ENCODE measurements at regions of chr6 and their contacts with region 1.

Region 1: DNA sequence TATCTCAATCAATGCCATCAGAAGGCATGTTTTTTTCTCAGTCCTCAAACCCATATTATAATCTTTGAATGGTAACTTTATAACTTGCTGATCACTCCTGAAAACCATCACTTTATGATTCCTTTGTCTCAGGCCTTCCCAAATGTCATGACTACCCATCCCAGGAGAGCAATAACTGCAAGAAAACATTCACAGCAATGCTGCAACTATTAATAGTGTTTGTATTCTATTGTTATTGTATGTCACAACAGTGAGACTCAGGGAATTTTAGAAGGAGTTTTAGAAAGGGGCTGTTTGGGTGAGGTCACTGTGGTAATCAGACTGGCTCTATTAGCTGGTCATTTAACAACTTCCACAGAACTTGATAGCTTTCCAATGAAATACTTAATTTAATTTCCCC is 301.4 kb upstream of the TBX18 start:
- DNase-seq: no peak

Region 2: DNA sequence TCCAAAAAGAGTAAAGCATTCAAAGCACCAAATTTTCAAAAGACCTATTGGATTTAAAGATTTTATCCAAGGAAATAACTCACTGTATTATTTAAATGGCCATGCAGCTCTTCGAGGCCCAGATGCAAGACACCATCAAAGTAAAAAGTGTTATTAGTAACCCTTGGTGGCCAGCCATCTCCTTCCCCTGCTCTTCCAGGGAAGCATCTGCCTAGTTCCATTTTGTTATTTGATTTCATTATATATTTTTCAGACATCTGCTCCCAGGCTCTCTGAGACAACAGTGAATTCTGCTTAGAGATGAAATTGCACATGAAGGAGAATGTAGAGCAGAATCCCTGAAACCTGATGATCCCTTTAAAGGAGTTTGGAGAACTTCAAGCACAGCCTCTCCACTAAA is 49.1 kb before region 1 on chr6:
- intact Hi-C with region 1: no loop called
- DNase-seq: no peak

Region 3: DNA sequence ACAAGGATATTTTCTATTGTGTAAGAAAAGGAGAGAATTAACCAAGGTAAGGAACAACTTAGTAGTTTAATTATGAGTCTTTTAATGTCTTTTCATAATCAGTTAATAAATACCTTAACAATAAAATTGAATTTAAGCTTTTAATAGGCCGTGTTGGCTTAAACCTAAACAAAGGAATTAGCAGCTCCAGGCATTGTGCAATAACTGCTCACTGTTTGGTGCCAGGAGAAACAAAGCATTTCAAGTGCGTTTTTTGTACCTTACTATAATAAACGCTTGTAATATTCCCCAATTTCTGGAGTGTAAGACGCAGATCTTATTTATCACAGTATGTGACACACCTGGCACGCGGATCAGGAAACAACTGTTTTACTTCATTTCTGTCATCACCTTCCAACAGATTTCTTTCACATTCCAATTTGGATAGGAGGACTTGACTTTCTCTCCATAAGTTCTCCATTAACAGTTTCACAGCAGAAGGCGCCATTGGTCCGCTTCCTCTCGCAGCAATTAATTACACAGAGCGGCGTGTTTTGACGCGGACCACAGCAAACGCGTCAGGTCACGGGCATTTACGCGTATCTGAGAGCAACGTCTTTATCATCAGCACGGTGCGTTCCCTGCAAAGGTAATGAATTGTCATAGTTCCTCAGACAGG is 48.2 kb after region 1 on chr6:
- intact Hi-C with region 1: loop called in 1 of 2 experiments (anchors 10 kb)
- DNase-seq: no peak